CD4-positive, alpha-beta T cell (primary cell): ENCODE measurements at regions of chr10 and their contacts with region 1.

Region 1: GRCh38 chr10:60728056-60728455 is 50.2 kb upstream of the CDK1 start:
- DNase-seq: peak in 6 of 14 experiments; percentile 8 to 90 (median 52)
- ATAC-seq: peak; percentile 68
- H3K4me3 ChIP-seq: peak overlapping the region; percentile 44
- H3K4me3 Mint-ChIP-seq: peak overlapping the region; percentile 81
- H3K27ac ChIP-seq: peak overlapping the region; percentile 60 to 65
- H3K27ac Mint-ChIP-seq: peak overlapping the region; percentile 99
- H3K4me1 ChIP-seq: peaks cover 16% of the 10 kb centered on the region
- H3K4me1 Mint-ChIP-seq: peaks cover 94% of the 10 kb centered on the region
- H3K27me3 ChIP-seq: no peaks in the 10 kb centered on the region
- H3K27me3 Mint-ChIP-seq: no peaks in the 10 kb centered on the region
- CTCF ChIP-seq: no peak

Region 2: GRCh38 chr10:60717852-60718251 is 10.2 kb before region 1 on chr10:
- CTCF ChIA-PET with region 1: interaction called, 3 read pairs
- POLR2A ChIA-PET with region 1: interaction called, 7 read pairs
- intact Hi-C with region 1: loop called in 1 of 2 experiments (anchors 2 kb)
- DNase-seq: peak in 1 of 14 experiments; percentile 28
- ATAC-seq: peak; percentile 52
- H3K4me3 ChIP-seq: no peak overlapping the region
- H3K4me3 Mint-ChIP-seq: no peak overlapping the region
- H3K27ac ChIP-seq: no peak overlapping the region
- H3K27ac Mint-ChIP-seq: no peak overlapping the region
- H3K4me1 ChIP-seq: peaks cover 11% of the 10 kb centered on the region
- H3K4me1 Mint-ChIP-seq: peaks cover 79% of the 10 kb centered on the region
- H3K27me3 ChIP-seq: no peaks in the 10 kb centered on the region
- H3K27me3 Mint-ChIP-seq: no peaks in the 10 kb centered on the region
- CTCF ChIP-seq: no peak